Caco-2 (cell line): ENCODE measurements at regions of chr7 and their contacts with region 1.

Region 1: DNA sequence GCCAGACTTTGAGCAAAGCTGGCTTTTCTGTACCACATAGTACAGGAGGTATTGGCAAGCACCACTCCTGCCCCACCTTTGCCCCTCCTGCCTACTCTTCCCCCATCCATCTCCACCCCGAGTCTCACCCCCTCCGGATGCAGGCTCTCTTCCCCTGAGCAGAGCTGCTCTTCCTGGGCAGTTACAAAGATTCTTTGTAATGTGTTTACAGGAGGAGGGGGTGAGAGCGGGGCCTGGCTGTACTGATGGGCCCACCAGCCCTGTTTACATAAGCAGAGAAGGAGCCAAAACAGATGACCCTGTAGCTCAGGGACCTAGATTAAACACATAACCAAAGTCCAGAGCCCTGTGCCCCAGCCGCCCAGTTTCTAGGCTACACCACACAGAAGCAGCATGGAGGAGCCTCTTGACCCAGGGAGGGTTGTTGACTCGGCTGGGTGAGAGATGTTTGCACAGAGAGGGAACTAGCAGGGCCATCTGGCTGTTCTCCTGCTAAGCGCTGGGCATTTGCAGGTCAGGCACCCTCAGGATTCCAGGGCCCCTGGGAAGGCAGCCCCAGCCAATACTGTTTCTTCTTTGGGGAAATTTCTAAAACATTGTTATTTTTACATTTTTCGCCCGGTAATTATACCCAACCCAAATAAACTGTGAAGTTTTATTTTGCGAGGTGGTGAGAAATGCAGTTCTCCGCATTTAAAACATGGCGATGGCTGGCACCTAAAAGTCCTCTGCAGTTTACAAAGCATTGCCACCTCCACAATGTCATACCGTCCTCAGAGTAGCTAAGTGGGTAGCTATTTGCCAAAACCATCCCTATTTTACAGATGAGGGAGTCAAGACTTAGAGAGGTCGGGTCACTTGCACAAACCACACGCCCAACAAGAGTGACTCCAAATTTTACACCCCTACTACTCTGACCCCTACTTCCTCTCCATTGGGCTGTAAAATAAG is 11.4 kb upstream of the ZKSCAN1 start:
- DNase-seq: peak; percentile 86 to 93
- H3K4me3 ChIP-seq: no peak overlapping the region
- H3K4me3 Mint-ChIP-seq: peak overlapping the region; percentile 59
- H3K27ac Mint-ChIP-seq: peak overlapping the region; percentile 86
- H3K4me1 ChIP-seq: peaks cover 33% of the 10 kb centered on the region
- H3K4me1 Mint-ChIP-seq: peaks cover 37% of the 10 kb centered on the region
- H3K27me3 ChIP-seq: no peaks in the 10 kb centered on the region
- H3K27me3 Mint-ChIP-seq: no peaks in the 10 kb centered on the region
- CTCF ChIP-seq: no peak

Region 2: DNA sequence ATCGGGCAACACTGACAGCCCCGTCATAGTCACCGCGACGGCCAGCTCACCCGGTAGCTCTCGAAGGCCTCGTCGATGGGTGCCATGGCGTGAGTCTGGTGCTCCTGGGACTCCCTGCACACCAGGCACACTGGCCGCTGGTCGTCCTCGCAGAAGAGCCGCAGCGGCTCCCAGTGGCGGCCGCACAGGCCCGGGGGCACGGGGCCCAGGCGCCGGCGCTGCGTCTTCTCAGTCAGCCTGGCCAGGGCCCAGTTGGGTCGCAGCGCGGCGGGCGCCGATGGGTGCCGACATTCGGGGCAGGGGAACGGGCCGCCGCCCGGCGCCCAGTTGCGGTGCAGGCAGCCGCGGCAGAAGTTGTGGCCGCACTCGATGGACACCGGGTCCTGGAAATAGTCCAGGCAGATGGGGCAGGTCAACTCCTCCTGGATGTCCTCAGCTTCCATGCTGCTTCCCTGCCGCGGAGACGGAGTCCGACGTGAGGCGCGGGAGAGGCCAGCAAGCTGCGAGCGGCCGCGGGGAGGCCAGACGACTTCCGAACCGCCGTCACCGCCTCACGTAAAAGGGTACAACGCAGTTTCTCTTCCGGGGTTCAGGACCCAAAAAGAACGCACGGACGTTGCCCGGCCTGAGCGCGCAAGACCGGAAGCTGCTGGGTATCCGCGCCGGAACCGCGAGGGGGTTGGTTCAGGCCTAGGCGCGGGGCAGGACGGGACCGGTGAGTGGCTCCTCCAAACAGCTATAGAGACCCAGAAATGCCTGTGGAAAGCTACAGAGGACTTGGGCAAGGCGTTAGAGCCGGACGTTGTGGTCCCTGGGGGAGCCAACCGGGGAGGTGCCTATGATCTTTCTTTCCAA is 84.8 kb before region 1 on chr7 and contains the start of gene TRIM4:
- CTCF ChIA-PET with region 1: no interaction called
- POLR2A ChIA-PET with region 1: no interaction called
- intact Hi-C with region 1: no loop called
- DNase-seq: peak; percentile 90 to 91
- H3K4me3 ChIP-seq: peak within 1 kb of the TSS; percentile 89
- H3K4me3 Mint-ChIP-seq: peak within 1 kb of the TSS; percentile 97
- H3K27ac Mint-ChIP-seq: peak within 1 kb of the TSS; percentile 97
- H3K4me1 ChIP-seq: peaks cover 13% of the 10 kb centered on the region; the same call in 1 of the 2 replicates
- H3K4me1 Mint-ChIP-seq: peaks cover 11% of the 10 kb centered on the region
- H3K27me3 ChIP-seq: no peaks in the 10 kb centered on the region
- H3K27me3 Mint-ChIP-seq: no peaks in the 10 kb centered on the region
- CTCF ChIP-seq: peak in 1 of 2 experiments; percentile 42
- total RNA-seq, gene TRIM4: 22.5 and 25.6 TPM in 2 replicates

Region 3: DNA sequence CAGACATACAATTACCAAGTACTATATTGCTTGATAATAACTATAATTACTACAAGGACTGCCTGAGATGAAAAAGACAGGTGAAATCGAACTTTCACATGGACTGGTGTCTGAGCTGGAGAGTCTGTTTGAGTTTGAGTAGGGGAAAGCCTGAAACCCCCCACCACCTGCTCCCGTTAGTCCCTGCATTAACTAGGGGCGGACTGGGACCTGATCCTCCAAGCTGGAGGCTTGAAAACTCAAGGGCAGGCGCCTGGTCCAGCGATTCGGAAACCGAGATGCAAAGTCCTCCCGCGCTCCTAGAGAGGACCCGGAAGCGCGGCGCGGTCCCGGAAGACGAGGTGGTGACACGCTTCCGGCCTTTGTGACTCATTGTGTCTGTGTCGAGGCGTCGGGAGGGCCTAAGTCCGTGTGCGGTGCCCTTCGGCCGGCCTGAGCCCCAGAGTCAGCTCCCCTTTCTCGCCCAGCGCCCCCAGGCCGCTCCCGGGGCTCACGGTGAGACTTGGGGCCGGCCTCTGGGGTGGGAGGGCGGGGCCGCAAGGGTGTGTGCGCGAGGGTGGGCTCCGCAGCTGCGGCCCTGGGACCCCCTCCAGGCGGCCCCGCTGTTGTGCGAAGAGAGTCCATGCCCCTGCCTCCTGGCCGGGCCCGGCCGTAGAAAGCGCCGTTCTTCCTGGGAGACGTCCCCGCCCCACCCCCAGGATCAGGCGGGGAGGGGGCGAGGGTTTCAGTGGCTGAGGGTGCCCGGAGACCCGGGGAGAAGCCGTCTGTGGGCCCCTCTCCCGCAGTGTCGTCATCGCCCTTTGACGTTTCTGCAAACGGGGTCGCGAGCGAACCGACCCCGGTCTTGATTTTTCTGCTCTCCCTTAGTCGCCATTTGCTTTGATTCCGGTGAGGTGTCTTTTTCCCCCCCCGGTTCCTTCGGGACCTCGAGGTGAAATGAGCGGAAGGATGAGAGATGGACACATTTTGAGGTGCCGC is 11.5 kb after region 1 on chr7 and contains the start of gene ZKSCAN1:
- CTCF ChIA-PET with region 1: interaction called, 6 read pairs
- POLR2A ChIA-PET with region 1: interaction called, 14 read pairs
- intact Hi-C with region 1: loop called (anchors 1 kb)
- DNase-seq: peak; percentile 86 to 90
- H3K4me3 ChIP-seq: peak within 1 kb of the TSS; percentile 82
- H3K4me3 Mint-ChIP-seq: peak within 1 kb of the TSS; percentile 91
- H3K27ac Mint-ChIP-seq: peak within 1 kb of the TSS; percentile 90
- H3K4me1 ChIP-seq: peaks cover 18% of the 10 kb centered on the region
- H3K4me1 Mint-ChIP-seq: peaks cover 14% of the 10 kb centered on the region
- H3K27me3 ChIP-seq: no peaks in the 10 kb centered on the region
- H3K27me3 Mint-ChIP-seq: no peaks in the 10 kb centered on the region
- CTCF ChIP-seq: no peak
- total RNA-seq, gene ZKSCAN1: 44.8 and 47.5 TPM in 2 replicates